ENCODE measurements at regions of chr14 and their contacts with region 1.

Region 1: DNA sequence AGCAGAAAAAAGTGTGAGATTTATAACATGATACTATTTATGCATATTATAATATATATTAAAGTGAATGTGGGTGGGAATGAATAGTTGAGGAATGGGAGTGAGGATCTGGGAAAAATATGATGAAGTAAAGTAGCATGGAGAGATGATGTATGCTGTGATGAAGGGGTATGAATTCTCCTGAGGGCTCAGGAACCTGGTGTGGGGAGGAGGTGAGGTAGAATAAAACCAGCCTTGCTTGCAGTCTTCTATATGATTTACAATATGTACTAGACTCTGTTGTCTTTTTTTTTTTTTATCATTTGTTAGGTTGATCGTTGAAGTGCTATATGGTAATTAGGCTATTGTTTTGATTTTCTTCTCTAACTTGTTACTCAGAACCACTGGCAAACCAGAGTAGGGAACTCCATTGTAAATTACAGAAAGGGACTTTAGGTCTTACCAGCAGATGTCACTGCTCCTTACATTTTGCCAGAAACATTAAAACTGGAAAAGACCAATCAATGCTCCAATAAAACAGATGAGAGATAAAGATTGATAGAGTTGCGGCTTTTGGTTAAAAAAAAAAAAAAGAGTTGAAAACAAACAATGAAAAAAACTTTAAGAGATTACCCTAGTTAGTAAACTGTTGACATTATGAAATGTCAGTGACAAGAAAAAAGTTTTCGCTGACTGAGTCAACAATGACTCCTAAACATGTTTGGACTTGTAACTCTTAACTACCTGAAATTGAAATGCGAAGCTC is 39.9 kb downstream of the ATL1 start:
- DNase-seq: no peak
- ATAC-seq: peak; percentile 42
- H3K4me3 Mint-ChIP-seq: no peak overlapping the region
- H3K27ac Mint-ChIP-seq: no peak overlapping the region
- H3K4me1 Mint-ChIP-seq: no peaks in the 10 kb centered on the region
- H3K27me3 Mint-ChIP-seq: no peaks in the 10 kb centered on the region

Region 2: DNA sequence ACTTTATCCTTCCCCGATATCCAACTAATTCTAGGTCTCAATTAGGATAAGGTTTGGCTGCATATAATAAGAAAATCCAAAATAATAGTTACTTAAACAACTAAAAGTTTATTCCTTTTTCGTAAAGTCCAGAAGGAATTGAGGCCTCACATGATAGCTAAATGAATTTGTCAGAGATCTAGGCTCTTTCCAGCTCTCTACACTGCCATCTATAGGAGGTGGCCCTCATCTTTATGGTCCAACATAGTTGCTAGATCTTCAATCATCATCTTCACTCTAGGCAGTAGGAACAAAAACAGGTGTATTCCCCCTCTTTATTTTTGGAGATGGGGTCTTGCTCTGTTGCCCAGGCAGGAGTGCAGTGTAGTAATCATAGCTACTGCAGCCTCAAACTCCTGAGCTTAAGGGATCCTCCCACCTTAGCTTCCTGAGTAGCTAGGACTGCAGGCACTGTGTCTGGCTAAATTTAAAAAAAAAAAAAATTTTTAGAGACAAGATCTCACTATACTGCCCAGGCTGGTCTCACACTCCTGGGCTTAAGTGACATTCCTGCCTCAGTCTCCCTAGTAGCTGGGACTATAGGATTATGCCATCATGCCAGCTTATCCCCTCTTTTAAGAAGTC is 114.7 kb after region 1 on chr14:
- CTCF ChIA-PET with region 1: interaction called, 6 read pairs
- POLR2A ChIA-PET with region 1: no interaction called
- intact Hi-C with region 1: loop called in 1 of 2 experiments (anchors 1 kb)
- DNase-seq: no peak
- ATAC-seq: peak; percentile 60
- H3K4me3 Mint-ChIP-seq: no peak overlapping the region
- H3K27ac Mint-ChIP-seq: no peak overlapping the region
- H3K4me1 Mint-ChIP-seq: no peaks in the 10 kb centered on the region
- H3K27me3 Mint-ChIP-seq: peaks cover 6% of the 10 kb centered on the region

Measured in activated CD4-positive, alpha-beta T cell treated with anti-CD3 and anti-CD28 coated beads for 36 hours (primary cell).